ENCODE measurements at regions of chr15 and their contacts with region 1.

Region 1: DNA sequence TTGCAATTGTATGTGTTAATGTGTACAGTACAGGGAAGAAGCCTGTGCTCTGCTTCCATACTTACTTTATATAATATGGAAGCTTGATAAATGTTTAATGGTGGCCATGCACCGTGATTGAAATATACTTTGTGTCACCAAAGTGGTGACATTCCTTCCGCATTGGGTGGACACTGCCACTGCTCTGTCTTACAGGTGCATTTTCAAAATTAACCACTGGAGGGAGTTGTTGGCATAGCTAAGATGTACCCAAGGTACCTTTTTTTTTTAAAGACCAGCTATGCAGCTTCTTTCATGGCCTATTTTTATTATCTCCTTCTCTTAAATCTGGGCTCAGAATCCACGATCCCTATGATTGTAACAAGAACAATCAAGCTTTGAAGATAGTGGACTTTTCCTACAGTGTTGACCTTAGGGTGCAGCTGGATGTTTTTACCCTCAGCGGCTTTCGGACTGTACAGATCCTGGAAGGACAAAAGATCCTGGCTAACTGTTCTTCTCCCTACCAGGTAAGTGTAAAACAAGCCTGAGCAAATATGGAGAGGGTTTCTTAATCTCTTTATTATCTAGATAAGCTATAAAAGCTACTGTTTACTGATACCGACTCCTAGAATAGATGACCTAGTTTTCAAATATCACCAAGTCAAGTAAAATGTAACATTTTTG is 21.6 kb upstream of the PAK6 start:
- DNase-seq: peak in 1 of 3 donors; percentile 82
- ATAC-seq: peak; percentile 99
- H3K4me3 ChIP-seq: no peak overlapping the region
- H3K4me1 ChIP-seq: peaks cover 3% of the 10 kb centered on the region
- CTCF ChIP-seq: peak; percentile 64

Region 2: DNA sequence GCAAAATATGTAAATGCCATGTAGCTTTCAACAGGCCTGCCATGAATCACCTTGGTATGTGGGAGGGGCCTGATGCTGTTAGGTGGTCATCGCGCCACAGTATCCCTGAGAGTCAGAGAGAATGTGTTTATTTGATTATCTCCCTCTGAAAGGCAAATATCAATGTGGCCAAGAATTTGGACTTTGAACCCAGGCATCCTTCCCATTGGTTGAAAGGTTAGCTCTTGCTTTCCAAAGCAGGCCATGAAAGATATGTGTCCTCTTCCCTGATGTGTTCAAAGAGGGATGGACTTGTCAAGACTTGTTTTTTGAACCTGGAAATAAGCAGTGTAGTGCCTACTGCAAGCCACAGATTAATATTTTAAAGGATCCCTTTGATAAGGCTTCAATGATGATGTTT is 215.0 kb before region 1 on chr15:
- intact Hi-C with region 1: no loop called
- DNase-seq: peak in 1 of 3 donors; percentile 55
- ATAC-seq: peak; percentile 81
- H3K4me3 ChIP-seq: no peak overlapping the region
- H3K4me1 ChIP-seq: no peaks in the 10 kb centered on the region
- CTCF ChIP-seq: no peak

Region 3: GRCh38 chr15:40029979-40030893 is 187.1 kb before region 1 on chr15:
- intact Hi-C with region 1: loop called in 1 of 2 experiments (anchors 5 kb)
- DNase-seq: peak in 2 of 3 donors; percentile 46 to 69
- ATAC-seq: peak; percentile 68
- H3K4me3 ChIP-seq: no peak overlapping the region
- H3K4me1 ChIP-seq: no peaks in the 10 kb centered on the region
- CTCF ChIP-seq: peak; percentile 29

Region 4: DNA sequence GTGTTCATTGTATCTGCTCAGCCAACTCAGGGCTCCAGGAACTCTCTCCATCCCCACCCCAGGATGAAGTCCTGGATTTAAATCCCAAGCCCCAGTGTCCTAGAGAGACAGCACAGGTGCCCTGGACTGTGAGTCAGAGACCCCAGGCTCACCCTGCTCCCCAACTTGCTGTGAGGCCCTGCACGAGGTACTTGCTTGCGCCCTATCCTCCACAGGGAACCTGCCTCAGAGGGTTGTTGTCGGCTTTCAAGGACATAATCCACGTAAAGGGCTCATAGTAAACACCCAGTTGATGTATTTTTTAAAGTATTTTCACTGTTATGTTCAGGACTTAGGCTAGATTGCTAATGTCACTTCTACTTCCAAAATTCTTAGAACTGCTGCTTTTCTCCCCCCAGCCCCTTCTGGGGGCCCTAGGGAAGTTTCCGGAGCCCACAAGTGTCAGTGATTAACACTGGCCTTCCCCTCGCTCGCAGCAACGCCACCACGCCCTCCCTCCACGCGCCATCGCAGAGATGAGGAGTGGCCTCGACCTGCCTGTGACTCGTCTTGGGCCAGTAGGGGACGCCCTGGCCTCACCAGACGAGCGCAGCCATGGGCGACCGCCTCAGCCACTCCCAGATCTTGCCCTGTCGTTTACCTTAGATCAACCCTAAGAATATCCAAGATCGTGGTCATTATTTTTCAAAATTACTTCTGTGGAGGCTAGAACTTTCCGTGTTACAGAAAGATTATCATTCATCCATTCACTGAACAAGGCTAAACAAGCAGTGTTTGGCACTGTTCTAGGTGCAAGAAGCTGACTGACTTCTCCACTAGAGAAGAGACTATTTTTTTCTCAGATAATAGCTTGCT is 172.3 kb before region 1 on chr15:
- intact Hi-C with region 1: loop called in 1 of 2 experiments (anchors 5 kb)
- DNase-seq: peak; percentile 93 to 96 (median 95)
- ATAC-seq: peak; percentile 90
- H3K4me3 ChIP-seq: no peak overlapping the region
- H3K4me1 ChIP-seq: peaks cover 38% of the 10 kb centered on the region
- CTCF ChIP-seq: peak; percentile 89

Region 5: DNA sequence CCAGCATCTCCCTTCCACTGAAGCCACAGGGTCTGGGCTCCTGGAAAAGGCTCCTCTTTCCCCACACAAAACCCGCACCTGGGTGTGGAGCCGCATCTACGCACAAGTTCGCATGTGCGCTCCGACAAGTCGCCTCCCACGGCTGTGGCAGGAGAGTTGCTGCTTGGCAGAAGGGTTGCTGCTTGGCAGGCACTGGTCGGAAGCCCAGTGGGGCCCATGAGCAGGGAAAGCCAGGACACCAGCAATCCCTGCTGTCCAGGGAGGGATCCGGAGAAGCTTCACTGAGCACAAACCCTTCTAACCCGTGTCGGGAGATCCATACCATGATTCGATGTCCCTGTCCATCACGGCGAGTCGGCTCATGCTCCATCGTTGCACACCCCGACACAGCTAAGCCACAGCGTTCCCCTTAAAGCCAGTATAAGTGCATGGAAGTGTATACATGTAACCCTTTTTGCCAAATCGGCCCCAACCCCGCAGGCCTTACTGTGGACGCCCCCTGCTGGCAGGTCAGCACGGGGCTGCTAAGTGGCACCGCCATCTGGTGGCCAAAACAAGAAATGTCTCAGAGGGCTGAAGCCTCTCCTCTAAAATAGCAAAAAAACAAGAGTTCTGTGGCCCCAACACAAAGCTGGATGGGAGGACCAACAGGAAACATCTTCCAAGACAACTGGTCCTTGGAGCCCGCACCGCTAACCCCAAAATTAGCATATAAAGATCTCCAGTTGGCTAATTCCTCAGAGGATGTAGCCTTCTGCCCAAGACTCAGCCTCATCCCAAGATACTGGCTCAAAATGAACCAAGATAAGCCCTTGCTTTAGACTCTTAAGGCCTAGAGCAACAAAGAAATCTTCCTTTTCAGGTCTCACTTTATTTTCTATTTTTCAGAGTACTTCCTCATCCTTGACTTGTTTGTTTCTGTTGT is 57.3 kb after region 1 on chr15:
- intact Hi-C with region 1: loop called (anchors 2 to 5 kb)
- DNase-seq: peak; percentile 81 to 89 (median 89)
- ATAC-seq: peak; percentile 88
- H3K4me3 ChIP-seq: no peak overlapping the region
- H3K4me1 ChIP-seq: peaks cover 2% of the 10 kb centered on the region
- CTCF ChIP-seq: peak; percentile 99